KBM-7 (cell line): ENCODE measurements at regions of chr15 and their contacts with region 1.

Region 1: GRCh38 chr15:52261498-52262242 is 33.9 kb downstream of the MYO5C start:
- DNase-seq: peak; percentile 59

Region 2: GRCh38 chr15:52735231-52736089 is 473.8 kb after region 1 on chr15:
- in situ Hi-C with region 1: loop called (anchors 10 kb)
- DNase-seq: peak; percentile 93